ENCODE measurements at regions of chr9 and their contacts with region 1.

Region 1: DNA sequence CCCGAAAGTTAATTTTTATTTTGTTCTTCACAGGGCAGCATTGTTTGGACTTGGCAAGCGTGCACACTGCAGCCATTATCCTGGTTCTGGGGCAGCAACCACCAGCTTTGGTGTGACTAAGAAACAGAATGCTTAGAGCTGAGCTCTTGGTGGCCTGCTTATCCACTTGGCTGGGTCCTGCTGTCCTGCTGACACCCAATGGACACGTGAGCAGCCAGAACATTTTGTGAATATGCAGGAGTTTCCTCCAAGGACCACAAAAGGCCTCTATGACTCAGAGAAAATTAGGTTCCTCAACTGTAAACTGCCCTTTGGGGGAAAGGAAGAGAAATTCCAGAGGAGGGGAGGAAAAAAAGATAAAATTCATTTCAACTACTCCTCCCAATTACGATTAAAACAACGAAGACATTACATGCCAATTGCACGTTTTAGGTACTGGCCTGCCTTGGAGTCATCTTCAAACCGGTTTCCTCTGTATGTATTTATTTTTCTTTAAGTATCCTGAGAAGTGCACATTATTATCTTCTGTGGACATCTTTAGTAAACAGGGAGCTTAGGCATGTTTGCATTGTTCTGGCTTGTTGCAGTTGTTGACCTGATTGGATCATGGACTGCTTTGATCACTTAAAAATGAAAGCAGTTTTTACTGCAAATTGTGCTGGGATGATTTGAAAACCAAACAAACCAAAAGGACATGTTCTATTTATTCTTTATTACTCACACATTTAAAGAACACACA is 82.3 kb upstream of the TLE4 start:
- DNase-seq: peak; percentile 18 to 85 (median 75)
- H3K4me3 ChIP-seq: peak overlapping the region in 27 of 59 donors; percentile 0 to 51 (median 21)
- H3K27ac ChIP-seq: peak overlapping the region in 40 of 59 donors; percentile 8 to 75 (median 54)
- H3K27me3 ChIP-seq: no peaks in the 10 kb centered on the region
- CTCF ChIP-seq: peak in 8 of 56 donors; percentile 6 to 39 (median 18)

Region 2: DNA sequence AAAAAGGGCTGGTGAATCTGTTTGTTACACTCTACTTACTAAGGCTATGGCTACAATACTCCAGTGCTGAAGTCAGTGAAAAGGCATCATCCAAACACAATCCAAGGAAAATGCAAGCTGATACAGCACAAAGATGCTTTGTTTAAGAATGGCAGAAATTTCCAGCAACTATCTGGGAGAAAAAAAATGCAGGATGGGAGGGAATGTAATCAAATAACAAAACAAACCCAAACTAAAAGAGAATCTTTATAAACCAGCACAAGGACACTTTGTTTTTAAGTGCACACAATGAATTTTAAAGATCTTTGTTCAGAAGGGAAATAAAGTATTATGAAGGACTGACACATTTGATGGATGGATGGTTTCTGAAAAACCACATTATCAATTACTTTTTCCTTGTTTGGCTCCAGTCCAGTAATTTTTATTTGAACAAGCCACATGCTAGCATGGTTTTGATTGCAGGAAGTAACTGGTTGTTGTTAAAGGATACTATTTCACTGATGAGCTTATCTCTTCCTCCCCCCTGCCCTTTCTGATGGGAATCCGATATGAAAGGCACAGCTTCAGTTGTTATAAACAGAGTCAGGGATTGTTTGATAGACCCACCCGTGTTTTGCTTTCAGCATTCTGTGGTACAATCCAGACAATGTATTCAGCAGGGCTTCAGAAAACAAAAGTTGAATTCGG is 70.2 kb after region 1 on chr9:
- intact Hi-C with region 1: loop called (anchors 1 to 10 kb)
- DNase-seq: peak in 1 of 10 donors; percentile 29
- H3K4me3 ChIP-seq: peak overlapping the region in 36 of 59 donors; percentile 1 to 54 (median 24)
- H3K27ac ChIP-seq: peak overlapping the region; percentile 23 to 99 (median 93)
- H3K27me3 ChIP-seq: no peaks in the 10 kb centered on the region
- CTCF ChIP-seq: peak in 3 of 56 donors; percentile 8 to 20 (median 12)

Measured in dorsolateral prefrontal cortex (tissue), 120 donors.